WTC11 (cell line): ENCODE measurements at regions of chr11 and their contacts with region 1.

Region 1: GRCh38 chr11:64629796-64630562 is 39.0 kb downstream of the SLC22A12 start:
- DNase-seq: peak; percentile 99
- ATAC-seq: peak; percentile 98
- H3K4me3 Mint-ChIP-seq: peak overlapping the region; percentile 43
- H3K27ac Mint-ChIP-seq: no peak overlapping the region
- H3K4me1 Mint-ChIP-seq: peaks cover 16% of the 10 kb centered on the region
- H3K27me3 Mint-ChIP-seq: peaks cover 66% of the 10 kb centered on the region
- CTCF ChIP-seq: peak; percentile 54

Region 2: DNA sequence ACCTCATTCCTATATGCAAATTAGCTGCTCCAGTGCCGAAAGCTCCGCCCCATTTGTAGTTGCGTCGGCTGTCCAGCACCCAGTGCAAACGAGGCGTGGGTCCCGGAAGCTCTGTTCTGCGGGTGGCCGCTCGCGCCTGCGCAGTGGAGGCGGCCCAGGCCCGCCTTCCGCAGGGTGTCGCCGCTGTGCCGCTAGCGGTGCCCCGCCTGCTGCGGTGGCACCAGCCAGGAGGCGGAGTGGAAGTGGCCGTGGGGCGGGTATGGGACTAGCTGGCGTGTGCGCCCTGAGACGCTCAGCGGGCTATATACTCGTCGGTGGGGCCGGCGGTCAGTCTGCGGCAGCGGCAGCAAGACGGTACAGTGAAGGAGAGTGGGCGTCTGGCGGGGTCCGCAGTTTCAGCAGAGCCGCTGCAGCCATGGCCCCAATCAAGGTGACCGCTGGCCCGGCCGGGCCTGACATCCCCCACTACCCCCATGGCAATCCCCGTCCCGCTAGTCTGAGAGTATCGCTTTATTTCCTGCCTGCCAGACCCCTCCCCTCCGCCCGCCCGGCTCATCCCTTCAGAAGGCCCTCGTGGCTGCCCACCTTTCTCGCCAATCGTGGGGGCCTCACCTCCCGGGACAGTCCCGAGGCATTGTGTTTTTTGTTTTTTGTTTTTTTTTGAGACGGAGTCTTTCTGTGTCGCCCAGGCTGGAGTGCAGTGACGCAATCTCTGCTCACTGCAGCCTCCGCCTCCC is 311.9 kb before region 1 on chr11 and contains the start of gene PRDX5:
- CTCF ChIA-PET with region 1: interaction called, 12 read pairs
- POLR2A ChIA-PET with region 1: no interaction called
- DNase-seq: peak; percentile 90
- ATAC-seq: peak; percentile 71
- H3K4me3 Mint-ChIP-seq: peak within 1 kb of the TSS; percentile 90
- H3K27ac Mint-ChIP-seq: peak within 1 kb of the TSS; percentile 99
- H3K4me1 Mint-ChIP-seq: peaks cover 17% of the 10 kb centered on the region
- H3K27me3 Mint-ChIP-seq: no peaks in the 10 kb centered on the region
- CTCF ChIP-seq: no peak
- total RNA-seq, gene PRDX5: 255 to 293 TPM (median 282 TPM) in 3 replicates

Region 3: DNA sequence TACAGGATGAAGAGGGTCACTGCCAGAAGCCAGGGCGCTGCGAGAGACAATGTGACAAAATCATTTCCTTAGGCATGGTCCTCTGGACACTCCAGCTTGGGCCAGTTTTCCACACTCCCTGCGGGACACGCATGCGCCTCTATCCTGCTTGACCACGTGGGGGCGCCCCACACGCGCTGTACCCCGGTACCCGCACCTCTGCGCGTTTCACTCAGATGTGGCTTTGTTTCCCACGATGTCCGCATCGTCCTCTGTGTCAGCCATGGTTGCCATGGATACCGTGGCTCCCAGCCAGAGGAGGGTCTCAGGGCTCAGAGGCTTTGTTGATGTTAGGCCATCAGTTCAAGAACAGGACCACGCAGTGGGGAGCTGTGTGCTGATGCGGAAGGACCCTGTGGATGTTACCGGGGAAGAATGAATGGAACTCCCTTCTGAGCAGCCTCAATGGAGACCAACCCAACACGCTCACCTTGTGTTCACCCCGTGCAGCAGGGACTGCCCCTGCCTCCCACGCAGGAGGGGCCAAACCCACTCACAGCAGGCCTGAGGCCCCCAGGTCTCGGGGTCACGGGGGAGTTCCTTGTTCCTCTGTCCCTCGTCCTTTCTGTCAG is 140.0 kb before region 1 on chr11:
- CTCF ChIA-PET with region 1: interaction called, 11 read pairs
- POLR2A ChIA-PET with region 1: no interaction called
- DNase-seq: peak; percentile 84
- ATAC-seq: peak; percentile 93
- H3K4me3 Mint-ChIP-seq: no peak overlapping the region
- H3K27ac Mint-ChIP-seq: no peak overlapping the region
- H3K4me1 Mint-ChIP-seq: 0 out of 2 replicates have a peak, but pooled peaks cover 3% of the 10 kb centered on the region
- H3K27me3 Mint-ChIP-seq: peaks cover 51% of the 10 kb centered on the region
- CTCF ChIP-seq: peak; percentile 85

Region 4: DNA sequence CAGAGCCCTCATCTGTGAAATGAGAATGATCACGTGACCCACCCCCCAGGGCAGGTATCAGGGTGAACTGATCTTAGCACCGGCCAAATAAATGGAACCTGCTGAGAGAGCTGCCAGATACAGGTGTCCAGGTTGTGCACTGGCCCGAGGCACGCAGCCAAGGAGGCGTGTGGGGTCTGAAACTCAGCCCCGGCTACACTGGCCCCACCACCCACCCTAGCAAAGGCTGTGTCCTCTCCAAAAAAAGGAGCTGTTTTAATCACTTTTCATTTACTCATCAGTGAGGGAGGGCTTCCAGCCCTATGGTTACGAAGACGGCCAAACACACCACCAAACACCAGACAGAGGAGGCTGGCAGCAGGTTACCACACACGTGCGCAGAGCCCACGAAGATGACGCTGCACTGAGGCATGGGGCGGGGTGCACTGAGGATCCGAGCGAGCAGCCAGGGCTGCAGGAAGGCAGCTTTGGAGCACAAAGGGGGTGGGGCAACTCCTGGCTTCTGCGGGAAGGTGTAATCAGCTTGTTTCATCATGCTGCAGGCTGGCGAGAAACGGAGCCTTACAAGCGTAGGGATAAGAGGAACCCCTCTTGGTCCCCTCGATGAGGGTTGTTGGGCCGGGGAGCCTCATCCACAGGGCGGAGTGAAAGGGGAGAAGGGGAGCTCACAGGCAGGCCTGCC is 58.4 kb before region 1 on chr11:
- CTCF ChIA-PET with region 1: interaction called, 26 read pairs
- POLR2A ChIA-PET with region 1: no interaction called
- DNase-seq: peak; percentile 53
- ATAC-seq: peak; percentile 63
- H3K4me3 Mint-ChIP-seq: no peak overlapping the region
- H3K27ac Mint-ChIP-seq: no peak overlapping the region
- H3K4me1 Mint-ChIP-seq: peaks cover 22% of the 10 kb centered on the region
- H3K27me3 Mint-ChIP-seq: peaks cover 19% of the 10 kb centered on the region
- CTCF ChIP-seq: no peak

Region 5: DNA sequence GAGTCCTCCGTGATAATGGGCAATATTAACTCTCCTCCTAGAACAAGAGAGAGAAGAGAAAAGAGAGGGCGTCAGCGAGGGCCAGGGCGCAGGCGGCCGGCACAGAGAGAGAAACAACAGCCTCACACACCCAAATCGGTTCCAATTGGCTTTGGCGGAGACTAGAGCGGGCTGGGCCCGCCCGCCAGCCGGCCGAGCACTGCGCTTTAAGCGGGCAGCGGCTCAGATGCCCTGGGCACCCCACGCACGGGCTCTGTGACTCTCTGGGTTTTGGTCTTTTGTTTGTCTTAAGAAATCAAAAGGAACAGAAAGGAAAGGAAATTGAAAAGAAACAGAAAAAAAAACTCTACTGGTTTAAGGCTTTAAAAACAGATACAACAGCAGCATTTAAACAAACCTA is 21.9 kb before region 1 on chr11:
- CTCF ChIA-PET with region 1: interaction called, 22 read pairs
- POLR2A ChIA-PET with region 1: no interaction called
- DNase-seq: no peak
- ATAC-seq: peak; percentile 38
- H3K4me3 Mint-ChIP-seq: no peak overlapping the region
- H3K27ac Mint-ChIP-seq: no peak overlapping the region
- H3K4me1 Mint-ChIP-seq: peaks cover 7% of the 10 kb centered on the region; the same call in 1 of the 2 replicates
- H3K27me3 Mint-ChIP-seq: no peaks in the 10 kb centered on the region; the same call in none of the 2 replicates
- CTCF ChIP-seq: no peak

Region 6: GRCh38 chr11:64644647-64645275 is 14.8 kb after region 1 on chr11:
- CTCF ChIA-PET with region 1: interaction called, 194 read pairs
- POLR2A ChIA-PET with region 1: interaction called, 8 read pairs
- DNase-seq: peak; percentile 51
- ATAC-seq: peak; percentile 53
- H3K4me3 Mint-ChIP-seq: peak overlapping the region; percentile 80
- H3K27ac Mint-ChIP-seq: no peak overlapping the region
- H3K4me1 Mint-ChIP-seq: peaks cover 25% of the 10 kb centered on the region
- H3K27me3 Mint-ChIP-seq: peaks cover 44% of the 10 kb centered on the region
- CTCF ChIP-seq: no peak

Region 7: DNA sequence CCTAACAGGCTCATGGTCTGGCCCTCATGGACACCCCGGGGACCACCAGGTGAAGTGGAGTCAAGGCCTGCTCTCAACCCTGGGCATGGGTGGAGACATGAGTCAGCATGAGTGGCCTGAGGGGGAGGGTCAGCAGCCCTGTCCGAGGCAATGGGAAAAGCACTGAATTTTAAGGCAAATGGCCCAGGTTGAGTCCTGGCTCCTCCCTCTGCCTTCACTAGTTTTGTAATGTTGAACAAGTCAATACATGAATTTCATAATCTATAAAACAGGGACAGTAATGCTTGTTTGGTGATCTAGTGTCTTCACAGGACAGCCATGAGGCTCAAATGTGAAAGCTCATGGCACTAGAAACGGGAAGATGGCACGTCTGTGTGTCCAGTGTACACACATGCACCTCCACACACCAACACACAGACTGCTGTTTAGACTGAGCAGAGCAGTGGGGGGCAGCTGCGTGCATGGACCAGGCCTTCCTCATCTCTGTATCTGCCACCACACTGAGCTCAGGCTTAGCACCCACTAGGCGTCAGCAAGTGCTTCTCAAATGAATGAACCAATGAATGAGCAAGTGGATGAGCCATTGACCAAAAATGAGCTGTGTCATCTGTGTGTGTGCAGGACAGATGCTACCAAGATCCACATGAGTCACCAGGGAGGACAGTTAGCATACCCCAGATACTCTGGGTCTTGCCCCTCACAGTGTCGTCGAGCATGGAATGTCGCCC is 29.6 kb after region 1 on chr11:
- CTCF ChIA-PET with region 1: interaction called, 13 read pairs
- POLR2A ChIA-PET with region 1: no interaction called
- DNase-seq: no peak
- ATAC-seq: no peak
- H3K4me3 Mint-ChIP-seq: no peak overlapping the region
- H3K27ac Mint-ChIP-seq: no peak overlapping the region
- H3K4me1 Mint-ChIP-seq: 0 out of 2 replicates have a peak, but pooled peaks cover 2% of the 10 kb centered on the region
- H3K27me3 Mint-ChIP-seq: peaks cover 3% of the 10 kb centered on the region; the same call in 1 of the 2 replicates
- CTCF ChIP-seq: no peak